Heart right ventricle (tissue), 16 donors: ENCODE measurements at regions of chr21 and their contacts with region 1.

Region 1: DNA sequence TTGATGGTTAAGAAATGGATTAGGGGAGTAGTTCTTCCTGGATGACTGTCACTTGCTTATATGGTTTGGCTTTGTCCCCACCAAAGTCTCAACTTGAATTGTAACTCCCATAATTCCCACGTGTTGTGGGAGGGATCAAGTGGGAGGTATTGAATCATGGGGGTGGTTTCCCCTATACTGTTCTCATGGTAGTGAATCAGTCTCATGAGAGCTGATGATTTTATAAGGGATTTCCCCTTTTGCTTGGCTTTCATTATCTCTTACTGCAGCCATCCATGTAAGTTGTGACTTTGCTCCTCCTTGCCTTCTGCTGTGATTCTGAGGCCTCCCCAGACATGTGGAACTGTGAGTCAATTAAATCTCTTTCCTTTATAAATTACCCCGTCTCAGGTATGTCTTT is 1621.1 kb downstream of the MRPL39 start:
- DNase-seq: no peak
- ATAC-seq: no peak
- H3K4me3 ChIP-seq: no peak overlapping the region
- H3K27ac ChIP-seq: no peak overlapping the region
- H3K4me1 ChIP-seq: no peaks in the 10 kb centered on the region
- H3K27me3 ChIP-seq: peaks cover 0 to 32% (median 0%) of the 10 kb centered on the region in 7 donors
- CTCF ChIP-seq: no peak

Region 2: DNA sequence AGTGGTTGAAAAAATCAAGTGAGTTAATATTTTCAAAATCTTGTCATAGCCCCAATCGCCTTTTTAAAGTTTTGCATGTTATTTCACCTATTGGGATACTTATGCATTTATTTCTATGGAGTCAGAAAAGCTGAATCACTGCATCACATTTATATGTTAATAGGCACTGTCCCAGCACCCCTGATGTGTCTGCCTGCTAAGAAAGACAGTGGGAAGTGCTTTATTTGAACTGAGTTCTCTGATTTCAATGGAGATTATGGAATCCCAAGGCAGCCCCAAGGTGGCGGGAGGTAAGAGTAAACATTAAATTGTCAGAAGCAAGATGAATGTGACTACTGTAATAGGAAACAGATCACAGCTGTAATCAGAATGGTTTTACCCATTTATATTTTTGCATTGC is 762.3 kb before region 1 on chr21:
- intact Hi-C with region 1: no loop called
- DNase-seq: no peak
- ATAC-seq: no peak
- H3K4me3 ChIP-seq: no peak overlapping the region
- H3K27ac ChIP-seq: no peak overlapping the region
- H3K4me1 ChIP-seq: no peaks in the 10 kb centered on the region
- H3K27me3 ChIP-seq: no peaks in the 10 kb centered on the region
- CTCF ChIP-seq: no peak

Region 3: DNA sequence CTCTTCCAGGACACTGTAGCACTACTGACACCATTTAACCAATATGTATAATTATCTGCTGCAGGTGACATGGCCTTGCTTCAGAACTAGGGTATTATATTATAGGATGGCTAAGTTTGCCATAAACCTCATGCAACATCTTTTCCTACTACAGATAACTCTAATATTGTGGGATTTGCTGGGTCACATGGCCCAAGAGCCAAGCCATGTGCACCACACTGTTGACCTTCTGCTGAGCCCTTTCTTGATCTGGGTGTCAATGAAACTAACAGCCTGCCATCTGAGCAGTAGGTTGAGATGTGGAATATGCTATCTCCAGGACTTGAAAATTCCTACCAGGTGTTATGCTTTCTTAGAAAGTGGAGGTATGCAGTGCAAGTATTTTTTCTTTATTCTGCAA is 670.0 kb before region 1 on chr21:
- intact Hi-C with region 1: no loop called
- DNase-seq: no peak
- ATAC-seq: no peak
- H3K4me3 ChIP-seq: no peak overlapping the region
- H3K27ac ChIP-seq: no peak overlapping the region
- H3K4me1 ChIP-seq: no peaks in the 10 kb centered on the region
- H3K27me3 ChIP-seq: no peaks in the 10 kb centered on the region
- CTCF ChIP-seq: no peak

Region 4: DNA sequence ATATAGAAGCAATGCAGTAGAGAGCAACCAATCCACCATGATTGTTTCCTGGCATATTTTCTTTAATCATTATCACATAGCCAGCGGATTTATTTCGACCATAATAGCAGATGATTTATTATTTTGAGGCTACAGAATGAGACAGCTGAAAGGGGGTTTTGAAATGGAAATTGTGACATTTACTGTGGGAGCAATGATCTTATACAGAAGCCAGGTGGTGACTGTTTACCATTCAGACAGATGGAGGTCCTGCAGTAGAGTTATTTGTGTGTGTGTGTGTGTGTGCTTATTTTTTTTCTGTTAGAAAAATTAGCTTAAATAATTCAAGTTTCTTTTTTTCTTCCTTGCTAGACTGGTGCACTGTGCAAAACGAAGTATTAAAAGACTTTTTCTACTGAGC is 163.5 kb before region 1 on chr21:
- intact Hi-C with region 1: no loop called
- DNase-seq: no peak
- ATAC-seq: no peak
- H3K4me3 ChIP-seq: no peak overlapping the region
- H3K27ac ChIP-seq: no peak overlapping the region
- H3K4me1 ChIP-seq: no peaks in the 10 kb centered on the region
- H3K27me3 ChIP-seq: no peaks in the 10 kb centered on the region
- CTCF ChIP-seq: no peak

Region 5: GRCh38 chr21:24045775-24046215 is 59.6 kb after region 1 on chr21:
- intact Hi-C with region 1: loop called in 1 of 10 experiments (anchors 10 kb)
- DNase-seq: peak; percentile 53 to 65
- ATAC-seq: peak; percentile 80 to 98 (median 90)
- H3K4me3 ChIP-seq: peak overlapping the region in 1 of 10 donors; percentile 6
- H3K27ac ChIP-seq: no peak overlapping the region
- H3K4me1 ChIP-seq: peaks cover 0 to 17% (median 0%) of the 10 kb centered on the region in 9 donors
- H3K27me3 ChIP-seq: no peaks in the 10 kb centered on the region
- CTCF ChIP-seq: peak in 7 of 9 donors; percentile 10 to 54 (median 44)